ENCODE measurements at regions of chr6 and their contacts with region 1.

Region 1: DNA sequence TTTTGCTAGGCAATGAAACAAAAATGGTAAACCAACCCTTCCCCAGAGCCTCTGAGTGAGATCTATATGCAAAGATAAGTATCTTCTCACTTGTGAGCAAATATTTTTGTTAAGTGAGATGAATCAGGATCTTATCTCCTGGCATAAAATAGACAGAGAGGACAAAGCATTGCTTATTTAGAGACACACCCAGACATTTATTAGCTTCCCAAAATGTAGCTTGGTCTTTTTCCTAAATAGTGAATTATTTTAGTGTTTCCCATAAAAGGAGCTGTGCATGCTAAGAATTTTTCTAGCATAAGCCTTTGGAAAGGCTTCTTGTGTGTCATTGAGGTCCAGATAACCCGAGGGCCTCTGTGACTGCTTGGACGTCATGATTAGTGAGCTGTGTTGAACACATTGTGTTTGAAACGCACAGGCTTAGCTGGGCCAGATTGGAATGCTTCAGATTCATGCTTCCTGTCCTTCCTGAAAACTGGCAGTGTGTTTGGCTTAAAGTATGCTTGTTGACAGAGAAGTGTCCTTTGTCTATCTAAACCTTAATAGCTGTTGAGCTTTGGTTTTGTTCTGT is 16.5 kb downstream of the MTHFD1L start:
- DNase-seq: no peak
- ATAC-seq: no peak
- H3K4me3 ChIP-seq: no peak overlapping the region
- H3K4me3 Mint-ChIP-seq: no peak overlapping the region
- H3K27ac ChIP-seq: no peak overlapping the region
- H3K27ac Mint-ChIP-seq: no peak overlapping the region
- H3K4me1 ChIP-seq: no peaks in the 10 kb centered on the region
- H3K4me1 Mint-ChIP-seq: no peaks in the 10 kb centered on the region
- H3K27me3 ChIP-seq: no peaks in the 10 kb centered on the region
- H3K27me3 Mint-ChIP-seq: no peaks in the 10 kb centered on the region

Region 2: DNA sequence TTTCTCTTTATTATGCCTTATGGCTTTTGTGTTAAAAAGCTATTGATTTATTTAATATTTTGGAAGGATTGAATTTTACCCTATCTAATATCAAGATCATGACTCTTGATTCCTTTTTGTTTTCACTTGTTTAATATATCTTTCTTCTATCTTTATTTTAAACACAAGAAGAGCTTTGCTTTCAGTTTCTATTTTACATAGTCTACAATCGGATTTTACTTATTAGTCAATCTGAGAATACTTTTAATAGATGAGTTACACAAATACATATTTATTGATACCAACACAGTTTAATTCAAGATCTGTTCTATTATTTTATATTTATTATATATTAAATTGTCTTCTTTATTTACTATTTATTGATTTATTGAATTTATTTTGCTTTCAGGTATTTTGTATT is 1144.3 kb after region 1 on chr6:
- CTCF ChIA-PET with region 1: no interaction called
- POLR2A ChIA-PET with region 1: no interaction called
- DNase-seq: no peak
- ATAC-seq: no peak
- H3K4me3 ChIP-seq: no peak overlapping the region
- H3K4me3 Mint-ChIP-seq: peak overlapping the region; percentile 16 to 45 (median 28)
- H3K27ac ChIP-seq: no peak overlapping the region
- H3K27ac Mint-ChIP-seq: no peak overlapping the region
- H3K4me1 ChIP-seq: no peaks in the 10 kb centered on the region
- H3K4me1 Mint-ChIP-seq: peaks cover 0 to 13% (median 1%) of the 10 kb centered on the region in 3 donors
- H3K27me3 ChIP-seq: no peaks in the 10 kb centered on the region
- H3K27me3 Mint-ChIP-seq: no peaks in the 10 kb centered on the region

Region 3: GRCh38 chr6:152316024-152316423 is 1434.0 kb after region 1 on chr6:
- CTCF ChIA-PET with region 1: interaction called in 1 of 2 experiments, 18 read pairs
- POLR2A ChIA-PET with region 1: no interaction called
- DNase-seq: no peak
- ATAC-seq: no peak
- H3K4me3 ChIP-seq: no peak overlapping the region
- H3K4me3 Mint-ChIP-seq: no peak overlapping the region
- H3K27ac ChIP-seq: no peak overlapping the region
- H3K27ac Mint-ChIP-seq: no peak overlapping the region
- H3K4me1 ChIP-seq: peaks cover under 1% of the 10 kb centered on the region in 2 experiments
- H3K4me1 Mint-ChIP-seq: peaks cover under 1 to 6% (median 5%) of the 10 kb centered on the region in 3 donors
- H3K27me3 ChIP-seq: no peaks in the 10 kb centered on the region
- H3K27me3 Mint-ChIP-seq: peaks cover 0 to 3% of the 10 kb centered on the region in 2 donors

Measured in T-cell (primary cell).